ENCODE measurements at regions of chr12 and their contacts with region 1.

Region 1: DNA sequence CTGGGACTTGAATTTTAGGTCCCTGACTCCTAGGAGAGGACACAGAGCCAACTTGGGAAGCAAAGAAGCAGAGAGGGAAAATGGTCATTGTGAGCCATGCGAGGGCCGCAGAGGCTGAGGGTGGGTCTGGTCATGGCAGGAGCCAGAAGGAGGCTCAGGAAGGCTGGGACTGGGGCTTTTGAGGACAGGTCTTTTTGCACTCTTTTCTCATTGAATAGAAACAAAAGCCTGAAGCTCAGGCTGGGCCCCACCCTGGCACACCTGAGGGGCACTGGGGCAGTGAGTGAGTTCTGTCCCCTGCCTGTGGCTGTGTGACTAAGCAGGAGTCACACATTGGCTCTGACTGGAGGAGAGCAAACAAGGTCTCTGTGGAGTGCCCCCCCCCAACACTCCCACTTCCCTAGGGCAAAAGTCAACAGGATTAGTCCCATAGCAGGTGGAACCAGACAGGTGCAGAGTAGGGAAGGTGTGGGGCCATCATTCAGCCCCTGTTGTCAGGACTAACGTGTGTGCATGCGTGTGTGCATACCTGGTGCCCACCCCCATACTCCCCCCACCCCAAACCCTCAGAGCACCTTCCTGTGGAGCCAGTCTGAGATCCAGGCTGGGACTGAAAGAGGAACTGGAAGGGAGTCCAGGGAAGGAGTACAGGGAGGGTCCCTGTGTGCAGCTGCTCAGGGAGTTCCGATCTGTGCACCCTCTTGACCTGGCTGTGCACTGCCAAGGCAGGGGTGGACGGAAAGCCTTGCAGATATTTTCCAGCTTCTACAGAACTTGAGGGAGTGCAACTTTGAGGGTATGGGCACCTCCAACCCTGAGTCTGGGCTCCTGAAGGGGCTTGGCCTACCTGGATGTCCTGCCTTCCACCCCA is 3.0 kb downstream of the KRT7 start:
- DNase-seq: peak; percentile 56 to 87
- H3K4me3 ChIP-seq: peak overlapping the region; percentile 96
- H3K27ac ChIP-seq: peak overlapping the region; percentile 97
- H3K4me1 ChIP-seq: peaks cover 70% of the 10 kb centered on the region
- H3K27me3 ChIP-seq: no peaks in the 10 kb centered on the region
- CTCF ChIP-seq: no peak

Region 2: GRCh38 chr12:51391283-51392162 is 844.5 kb before region 1 on chr12 and contains the start of gene GALNT6:
- CTCF ChIA-PET with region 1: no interaction called
- POLR2A ChIA-PET with region 1: no interaction called
- intact Hi-C with region 1: no loop called
- DNase-seq: peak; percentile 55 to 85
- H3K4me3 ChIP-seq: peak within 1 kb of the TSS; percentile 91
- H3K27ac ChIP-seq: peak within 1 kb of the TSS; percentile 36
- H3K4me1 ChIP-seq: peaks cover 59% of the 10 kb centered on the region
- H3K27me3 ChIP-seq: no peaks in the 10 kb centered on the region
- CTCF ChIP-seq: no peak
- total RNA-seq, gene GALNT6: 73.0 and 83.5 TPM in 2 replicates

Region 3: GRCh38 chr12:51784688-51785087 is 451.4 kb before region 1 on chr12:
- CTCF ChIA-PET with region 1: no interaction called
- POLR2A ChIA-PET with region 1: no interaction called
- intact Hi-C with region 1: no loop called
- DNase-seq: no peak
- H3K4me3 ChIP-seq: no peak overlapping the region
- H3K27ac ChIP-seq: no peak overlapping the region
- H3K4me1 ChIP-seq: no peaks in the 10 kb centered on the region
- H3K27me3 ChIP-seq: peaks cover 78% of the 10 kb centered on the region
- CTCF ChIP-seq: no peak

Region 4: GRCh38 chr12:52156736-52157565 is 79.1 kb before region 1 on chr12:
- CTCF ChIA-PET with region 1: interaction called, 4 read pairs
- POLR2A ChIA-PET with region 1: interaction called, 11 read pairs
- intact Hi-C with region 1: loop called (anchors 2 kb)
- DNase-seq: peak; percentile 54 to 82
- H3K4me3 ChIP-seq: no peak overlapping the region
- H3K27ac ChIP-seq: no peak overlapping the region
- H3K4me1 ChIP-seq: peaks cover 58% of the 10 kb centered on the region
- H3K27me3 ChIP-seq: no peaks in the 10 kb centered on the region
- CTCF ChIP-seq: peak; percentile 99

Region 5: DNA sequence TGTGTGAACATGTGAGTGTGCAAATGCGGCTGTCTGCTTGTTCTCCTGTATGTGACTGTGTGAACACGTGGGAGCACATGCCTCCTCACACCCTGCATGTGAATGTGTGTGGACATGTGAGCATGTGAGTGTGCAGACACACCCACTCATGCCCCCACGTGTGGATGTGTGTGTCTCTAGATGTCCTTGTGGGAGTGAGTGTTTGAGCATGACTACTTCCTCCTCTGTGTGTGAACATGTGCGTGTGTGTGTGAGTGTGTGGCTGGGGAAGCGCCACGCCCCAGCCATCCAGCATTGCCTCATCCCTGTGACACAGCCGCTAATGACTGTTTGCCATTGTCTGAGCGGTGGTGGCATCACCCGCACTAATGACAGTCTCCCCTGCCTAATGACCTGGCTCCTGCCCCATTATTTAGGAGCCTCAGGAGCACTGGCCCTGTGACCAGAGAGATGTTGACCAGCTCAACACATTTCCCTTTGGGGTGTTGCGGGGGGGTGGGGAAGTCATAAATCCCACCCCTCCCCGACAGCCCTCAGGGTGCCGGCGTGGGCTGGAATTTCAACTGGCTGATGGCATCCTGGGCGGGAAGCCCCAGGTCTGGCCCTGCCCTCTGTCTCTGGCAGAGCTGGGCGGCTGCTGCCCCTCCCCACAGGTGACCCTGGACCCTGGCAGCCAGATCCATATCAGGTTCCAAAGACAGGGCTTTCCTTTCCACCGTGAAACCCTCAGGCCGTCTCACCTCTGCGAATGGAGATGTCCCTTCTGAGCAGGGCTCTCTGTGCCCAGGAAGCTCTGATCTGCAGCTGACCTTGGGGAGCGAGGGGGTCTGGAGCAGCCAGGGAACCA is 32.8 kb before region 1 on chr12:
- CTCF ChIA-PET with region 1: no interaction called
- POLR2A ChIA-PET with region 1: no interaction called
- intact Hi-C with region 1: no loop called
- DNase-seq: peak; percentile 77 to 78
- H3K4me3 ChIP-seq: no peak overlapping the region
- H3K27ac ChIP-seq: peak overlapping the region; percentile 47; the same call in 1 of the 2 replicates
- H3K4me1 ChIP-seq: peaks cover 71% of the 10 kb centered on the region
- H3K27me3 ChIP-seq: no peaks in the 10 kb centered on the region
- CTCF ChIP-seq: no peak

Region 6: DNA sequence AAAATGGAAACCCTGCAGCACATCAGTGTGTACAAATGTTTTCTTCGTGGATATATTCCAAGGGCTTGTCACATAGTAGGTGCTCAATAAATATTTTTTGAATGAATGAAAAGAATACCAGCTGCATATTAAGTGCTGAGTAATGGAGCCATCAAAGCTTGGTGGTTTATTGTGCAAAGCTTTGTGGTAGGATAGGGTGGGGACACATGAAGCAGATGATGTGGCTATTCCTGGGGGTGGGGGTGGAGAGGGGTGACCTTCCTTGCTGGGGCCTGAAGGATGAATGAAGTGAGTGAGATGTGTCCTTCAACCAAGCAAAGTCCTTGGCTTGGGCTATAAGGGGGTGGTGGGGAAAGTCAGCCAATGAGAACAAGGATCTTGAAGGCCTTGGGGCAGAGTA is 59.6 kb after region 1 on chr12:
- CTCF ChIA-PET with region 1: no interaction called
- POLR2A ChIA-PET with region 1: no interaction called
- intact Hi-C with region 1: no loop called
- DNase-seq: no peak
- H3K4me3 ChIP-seq: no peak overlapping the region
- H3K27ac ChIP-seq: no peak overlapping the region
- H3K4me1 ChIP-seq: 0 out of 2 replicates have a peak, but pooled peaks cover 4% of the 10 kb centered on the region
- H3K27me3 ChIP-seq: no peaks in the 10 kb centered on the region
- CTCF ChIP-seq: no peak

Measured in PC-9 (cell line).